Panc1 (cell line): ENCODE measurements at regions of chr5 and their contacts with region 1.

Region 1: GRCh38 chr5:73088026-73088425 is 32.3 kb upstream of the TMEM171 start:
- DNase-seq: no peak
- ATAC-seq: no peak
- H3K4me3 ChIP-seq: no peak overlapping the region
- H3K27ac ChIP-seq: no peak overlapping the region
- H3K4me1 ChIP-seq: no peaks in the 10 kb centered on the region
- H3K27me3 ChIP-seq: no peaks in the 10 kb centered on the region
- CTCF ChIP-seq: no peak

Region 2: GRCh38 chr5:73120222-73121118 is 32.4 kb after region 1 on chr5 and contains the start of gene TMEM171:
- CTCF ChIA-PET with region 1: no interaction called
- POLR2A ChIA-PET with region 1: no interaction called
- in situ Hi-C with region 1: no loop called
- intact Hi-C with region 1: no loop called
- DNase-seq: no peak
- ATAC-seq: peak; percentile 91
- H3K4me3 ChIP-seq: peak within 1 kb of the TSS; percentile 49 to 71
- H3K27ac ChIP-seq: peak within 1 kb of the TSS; percentile 36; the same call in 1 of the 2 replicates
- H3K4me1 ChIP-seq: peaks cover 6% of the 10 kb centered on the region; the same call in 1 of the 2 replicates
- H3K27me3 ChIP-seq: no peaks in the 10 kb centered on the region; the same call in 1 of the 2 replicates
- CTCF ChIP-seq: no peak
- total RNA-seq, gene TMEM171: 2.1 TPM

Region 3: DNA sequence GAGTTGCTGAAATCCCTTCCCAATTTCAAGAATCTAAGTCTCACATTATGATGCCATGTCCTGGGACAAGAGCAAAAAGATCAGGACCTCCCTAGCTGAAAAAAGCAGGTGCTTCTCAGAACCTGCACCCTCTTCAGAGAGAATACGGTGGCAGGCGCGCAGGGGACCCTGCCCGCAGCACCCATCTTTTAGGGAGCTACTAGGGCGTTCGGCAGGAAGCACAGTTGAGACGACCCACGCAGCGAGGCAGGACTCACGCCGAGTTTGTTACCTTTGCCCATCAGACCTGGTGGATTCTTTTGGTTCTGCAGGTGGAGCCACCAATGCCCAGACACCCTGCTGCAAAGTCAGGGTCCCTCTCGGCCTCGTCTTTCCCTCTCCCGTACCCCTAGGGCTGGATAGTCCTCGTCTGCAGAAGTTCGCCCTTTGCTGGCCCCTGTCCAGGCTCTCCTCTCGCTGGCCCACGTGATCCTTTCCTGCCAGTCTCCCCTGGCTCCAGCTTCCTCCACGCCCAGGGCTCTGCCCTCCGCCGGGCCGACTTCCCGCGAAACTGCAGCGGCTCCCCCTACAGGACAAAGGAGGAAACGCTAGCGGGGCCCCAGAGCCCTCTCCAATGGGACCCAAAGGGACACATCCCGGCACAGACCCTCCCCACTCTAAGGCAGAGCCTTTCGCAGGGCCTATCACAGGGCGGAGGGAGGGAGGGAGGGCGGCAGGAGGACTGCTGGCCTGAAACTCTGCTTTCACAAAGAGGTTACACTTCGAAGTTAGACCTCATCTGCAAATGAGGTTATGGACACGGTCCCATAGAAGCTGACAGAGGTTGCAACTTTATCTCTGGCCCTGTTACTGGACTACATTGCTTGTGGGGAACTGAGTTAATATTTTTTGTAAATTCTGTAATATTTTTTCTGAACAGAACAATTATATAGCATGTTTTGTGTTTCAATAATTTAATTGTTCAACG is 113.8 kb after region 1 on chr5:
- CTCF ChIA-PET with region 1: interaction called, 10 read pairs
- POLR2A ChIA-PET with region 1: no interaction called
- in situ Hi-C with region 1: no loop called
- intact Hi-C with region 1: loop called (anchors 10 kb)
- DNase-seq: peak; percentile 45
- ATAC-seq: peak; percentile 99
- H3K4me3 ChIP-seq: peak overlapping the region; percentile 21 to 45
- H3K27ac ChIP-seq: no peak overlapping the region
- H3K4me1 ChIP-seq: no peaks in the 10 kb centered on the region
- H3K27me3 ChIP-seq: no peaks in the 10 kb centered on the region
- CTCF ChIP-seq: peak; percentile 97

Region 4: DNA sequence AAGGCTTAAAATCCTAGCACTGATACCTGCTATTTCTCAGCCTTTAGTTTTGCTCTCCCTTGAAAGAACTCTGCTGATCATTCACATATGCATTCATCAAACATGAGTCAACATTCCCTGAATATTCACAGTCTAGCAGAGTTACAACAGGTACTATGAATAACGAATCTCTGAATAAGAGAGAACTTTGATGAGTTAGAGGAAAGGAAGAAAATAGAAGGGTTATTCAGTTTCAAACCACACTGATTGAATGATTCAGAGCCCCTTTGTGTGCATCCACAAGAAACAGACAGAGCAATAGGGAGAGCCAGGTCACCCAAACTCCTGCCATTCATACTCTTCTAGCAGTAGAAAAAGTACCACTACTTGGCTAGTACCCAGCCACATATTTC is 324.6 kb after region 1 on chr5:
- CTCF ChIA-PET with region 1: no interaction called
- POLR2A ChIA-PET with region 1: no interaction called
- in situ Hi-C with region 1: no loop called
- intact Hi-C with region 1: no loop called
- DNase-seq: no peak
- ATAC-seq: peak; percentile 49; the same call in 1 of the 2 replicates
- H3K4me3 ChIP-seq: no peak overlapping the region
- H3K27ac ChIP-seq: peak overlapping the region; percentile 3; the same call in 1 of the 2 replicates
- H3K4me1 ChIP-seq: peaks cover 16% of the 10 kb centered on the region
- H3K27me3 ChIP-seq: no peaks in the 10 kb centered on the region
- CTCF ChIP-seq: no peak

Region 5: DNA sequence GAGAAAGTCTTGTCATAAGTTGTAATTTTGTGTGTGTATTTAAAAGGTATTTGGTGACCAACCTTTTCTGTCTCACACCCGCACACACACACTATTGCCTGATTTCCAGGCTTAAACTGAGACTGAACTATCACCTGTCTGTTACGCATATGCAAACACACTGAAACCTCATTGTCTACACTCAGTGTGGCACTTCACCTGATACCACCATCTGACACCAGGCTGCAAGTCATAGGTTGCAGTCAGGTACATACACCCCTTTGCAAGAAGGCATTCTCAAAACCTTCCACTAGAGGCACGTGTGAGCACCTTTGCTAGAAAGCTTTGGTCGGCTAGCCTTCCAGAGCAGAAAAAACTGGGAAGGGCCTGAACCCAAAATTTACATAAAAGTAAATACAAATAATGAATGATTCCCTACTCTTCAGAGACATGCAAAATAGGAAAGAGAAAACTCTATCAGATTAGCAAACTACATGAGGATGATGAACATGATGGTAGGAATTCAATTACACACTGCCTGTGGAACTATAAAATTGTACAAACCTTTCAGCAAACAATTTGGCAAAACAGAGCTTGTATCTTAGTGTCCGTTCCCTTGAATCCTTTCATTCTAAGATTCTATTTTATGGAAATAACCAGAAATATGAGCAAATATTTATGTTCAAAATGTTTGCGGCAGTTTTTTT is 366.5 kb after region 1 on chr5:
- CTCF ChIA-PET with region 1: no interaction called
- POLR2A ChIA-PET with region 1: no interaction called
- in situ Hi-C with region 1: no loop called
- intact Hi-C with region 1: loop called (anchors 5 kb)
- DNase-seq: peak; percentile 77
- ATAC-seq: peak; percentile 67
- H3K4me3 ChIP-seq: no peak overlapping the region
- H3K27ac ChIP-seq: no peak overlapping the region
- H3K4me1 ChIP-seq: peaks cover 14% of the 10 kb centered on the region
- H3K27me3 ChIP-seq: no peaks in the 10 kb centered on the region
- CTCF ChIP-seq: peak; percentile 92